PC-9 (cell line): ENCODE measurements at regions of chr2 and their contacts with region 1.

Region 1: DNA sequence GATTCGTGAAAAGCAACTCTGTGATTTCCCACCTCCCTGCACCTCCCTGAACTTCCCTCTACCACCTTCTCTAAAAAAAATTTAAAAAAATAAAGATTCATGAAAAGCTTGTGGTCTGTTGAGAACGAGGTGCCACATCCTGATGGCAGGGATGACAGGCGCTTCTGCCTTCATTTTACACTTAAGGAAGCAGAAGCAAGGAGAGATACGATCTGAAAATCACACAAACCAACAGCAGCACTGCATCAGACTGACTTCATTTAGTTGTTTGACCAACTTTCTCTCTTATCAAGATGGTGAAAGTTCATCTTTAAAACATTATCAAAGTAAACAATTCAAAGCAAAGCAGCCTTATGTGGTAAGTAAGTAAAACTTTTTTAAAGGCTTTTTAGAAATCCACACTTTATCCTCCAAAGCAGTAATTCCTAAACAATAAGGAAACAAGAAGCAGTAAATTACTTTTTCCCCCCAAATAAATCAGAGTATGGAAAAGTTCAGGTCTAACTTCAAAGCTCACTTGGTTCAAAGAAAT is 15.5 kb downstream of the WDFY1 start:
- DNase-seq: peak; percentile 36 to 54
- H3K4me3 ChIP-seq: no peak overlapping the region
- H3K27ac ChIP-seq: no peak overlapping the region
- H3K4me1 ChIP-seq: peaks cover 34% of the 10 kb centered on the region
- H3K27me3 ChIP-seq: no peaks in the 10 kb centered on the region
- CTCF ChIP-seq: no peak

Region 2: GRCh38 chr2:223681125-223681524 is 248.5 kb before region 1 on chr2:
- CTCF ChIA-PET with region 1: no interaction called
- POLR2A ChIA-PET with region 1: no interaction called
- intact Hi-C with region 1: no loop called
- DNase-seq: peak in 1 of 2 experiments; percentile 76
- H3K4me3 ChIP-seq: no peak overlapping the region
- H3K27ac ChIP-seq: 0 out of 2 replicates have a peak overlapping the region, but pooled peaks have one; percentile 8
- H3K4me1 ChIP-seq: peaks cover 11% of the 10 kb centered on the region
- H3K27me3 ChIP-seq: no peaks in the 10 kb centered on the region
- CTCF ChIP-seq: no peak

Region 3: GRCh38 chr2:223860809-223861738 is 68.6 kb before region 1 on chr2:
- CTCF ChIA-PET with region 1: no interaction called
- POLR2A ChIA-PET with region 1: no interaction called
- intact Hi-C with region 1: no loop called
- DNase-seq: peak; percentile 92 to 98
- H3K4me3 ChIP-seq: no peak overlapping the region; the same call in 1 of the 2 replicates
- H3K27ac ChIP-seq: peak overlapping the region; percentile 85
- H3K4me1 ChIP-seq: peaks cover 51% of the 10 kb centered on the region
- H3K27me3 ChIP-seq: no peaks in the 10 kb centered on the region
- CTCF ChIP-seq: peak; percentile 67

Region 4: GRCh38 chr2:223877731-223878435 is 51.8 kb before region 1 on chr2:
- CTCF ChIA-PET with region 1: no interaction called
- POLR2A ChIA-PET with region 1: no interaction called
- intact Hi-C with region 1: no loop called
- DNase-seq: peak in 1 of 2 experiments; percentile 94
- H3K4me3 ChIP-seq: peak overlapping the region; percentile 3; the same call in 1 of the 2 replicates
- H3K27ac ChIP-seq: peak overlapping the region; percentile 72
- H3K4me1 ChIP-seq: peaks cover 26% of the 10 kb centered on the region
- H3K27me3 ChIP-seq: no peaks in the 10 kb centered on the region
- CTCF ChIP-seq: no peak

Region 5: DNA sequence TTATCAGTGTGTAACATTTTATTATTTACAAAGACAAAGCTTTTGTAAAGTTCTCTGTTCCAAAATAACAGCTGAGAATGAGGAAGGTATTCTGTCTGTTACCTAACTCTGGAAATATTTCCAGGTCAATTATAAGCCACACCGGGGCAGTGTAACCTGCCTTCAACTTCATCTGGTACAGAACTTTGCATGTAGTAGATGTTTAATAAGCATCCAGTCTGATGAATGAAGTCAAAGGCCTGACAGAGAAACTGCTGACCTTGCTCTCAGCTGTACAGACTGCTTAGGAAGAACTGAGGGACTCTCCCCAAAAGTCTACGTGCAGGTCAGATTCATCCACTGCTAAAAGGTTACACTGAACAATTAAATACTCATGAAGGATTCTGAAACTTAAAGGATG is 27.8 kb before region 1 on chr2:
- CTCF ChIA-PET with region 1: interaction called, 18 read pairs
- POLR2A ChIA-PET with region 1: no interaction called
- intact Hi-C with region 1: no loop called
- DNase-seq: peak in 1 of 2 experiments; percentile 58
- H3K4me3 ChIP-seq: no peak overlapping the region
- H3K27ac ChIP-seq: no peak overlapping the region
- H3K4me1 ChIP-seq: 0 out of 2 replicates have a peak, but pooled peaks cover 1% of the 10 kb centered on the region
- H3K27me3 ChIP-seq: no peaks in the 10 kb centered on the region
- CTCF ChIP-seq: peak; percentile 55

Region 6: DNA sequence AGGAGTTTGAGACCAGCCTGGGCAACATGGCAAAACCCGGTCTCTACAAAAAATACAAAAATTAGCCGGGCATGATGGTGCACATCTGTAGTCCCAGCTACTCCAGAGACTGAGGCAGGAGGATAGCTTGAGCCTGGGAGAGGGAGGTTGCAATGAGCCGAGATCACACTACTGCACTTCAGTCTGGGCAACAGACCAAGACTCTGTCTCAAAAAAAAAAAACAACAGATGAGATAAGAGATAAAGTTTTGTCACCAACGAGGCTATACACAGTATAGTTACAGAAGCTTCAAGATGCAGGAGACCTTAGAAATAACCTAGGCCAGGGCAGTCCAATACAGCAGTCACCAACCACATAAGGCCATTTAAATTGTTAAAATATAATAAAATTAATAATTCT is 462.9 kb after region 1 on chr2:
- CTCF ChIA-PET with region 1: no interaction called
- POLR2A ChIA-PET with region 1: no interaction called
- intact Hi-C with region 1: no loop called
- DNase-seq: no peak
- H3K4me3 ChIP-seq: no peak overlapping the region
- H3K27ac ChIP-seq: no peak overlapping the region
- H3K4me1 ChIP-seq: no peaks in the 10 kb centered on the region
- H3K27me3 ChIP-seq: no peaks in the 10 kb centered on the region
- CTCF ChIP-seq: no peak